Panc1 (cell line): ENCODE measurements at regions of chr5 and their contacts with region 1.

Region 1: GRCh38 chr5:143582869-143583268 is 179.4 kb upstream of the NR3C1 start:
- DNase-seq: no peak
- ATAC-seq: no peak
- H3K4me3 ChIP-seq: no peak overlapping the region
- H3K27ac ChIP-seq: no peak overlapping the region
- H3K4me1 ChIP-seq: no peaks in the 10 kb centered on the region
- H3K27me3 ChIP-seq: no peaks in the 10 kb centered on the region
- CTCF ChIP-seq: no peak

Region 2: DNA sequence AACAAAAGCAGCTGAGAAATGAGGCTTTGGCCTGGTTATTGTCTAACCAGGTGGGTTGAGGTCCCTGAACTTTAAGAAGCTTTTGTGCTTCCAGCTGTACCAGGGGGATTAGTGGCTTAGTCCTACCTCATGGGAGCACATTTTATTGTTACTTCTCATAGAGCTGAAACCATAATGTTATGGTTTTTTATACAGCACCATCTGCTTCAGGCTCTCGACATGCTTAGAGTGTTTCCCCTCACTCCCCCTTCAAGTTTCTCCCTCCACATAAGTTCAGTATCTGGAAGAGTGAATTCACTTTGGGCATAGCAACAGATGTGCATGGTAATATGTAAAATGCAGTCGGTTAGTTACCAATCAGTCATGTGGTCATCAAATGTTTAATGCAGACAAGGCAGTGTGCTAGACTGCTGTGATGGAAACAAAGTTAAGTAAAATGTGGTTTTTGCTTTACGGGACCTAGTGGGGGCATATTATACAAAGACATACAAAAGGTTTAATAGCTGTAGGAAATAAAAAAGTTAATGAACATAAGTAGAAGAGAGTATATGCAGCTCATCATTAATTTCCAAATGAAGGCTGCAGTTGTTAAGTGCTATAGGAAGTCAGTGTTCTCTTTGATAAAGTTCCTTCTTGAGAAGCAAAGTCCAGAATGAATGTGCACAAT is 1162.2 kb before region 1 on chr5:
- CTCF ChIA-PET with region 1: no interaction called
- POLR2A ChIA-PET with region 1: interaction called, 18 read pairs
- in situ Hi-C with region 1: no loop called
- intact Hi-C with region 1: no loop called
- DNase-seq: no peak
- ATAC-seq: no peak
- H3K4me3 ChIP-seq: no peak overlapping the region
- H3K27ac ChIP-seq: no peak overlapping the region
- H3K4me1 ChIP-seq: 0 out of 2 replicates have a peak, but pooled peaks cover 5% of the 10 kb centered on the region
- H3K27me3 ChIP-seq: no peaks in the 10 kb centered on the region
- CTCF ChIP-seq: no peak

Region 3: GRCh38 chr5:142959683-142960657 is 622.9 kb before region 1 on chr5:
- CTCF ChIA-PET with region 1: no interaction called
- POLR2A ChIA-PET with region 1: interaction called, 13 read pairs
- in situ Hi-C with region 1: no loop called
- intact Hi-C with region 1: no loop called
- DNase-seq: peak; percentile 59
- ATAC-seq: peak; percentile 81
- H3K4me3 ChIP-seq: no peak overlapping the region
- H3K27ac ChIP-seq: no peak overlapping the region
- H3K4me1 ChIP-seq: 0 out of 2 replicates have a peak, but pooled peaks cover 3% of the 10 kb centered on the region
- H3K27me3 ChIP-seq: no peaks in the 10 kb centered on the region
- CTCF ChIP-seq: no peak

Region 4: GRCh38 chr5:143968011-143968878 is 385.4 kb after region 1 on chr5:
- CTCF ChIA-PET with region 1: no interaction called
- POLR2A ChIA-PET with region 1: no interaction called
- in situ Hi-C with region 1: no loop called
- intact Hi-C with region 1: no loop called
- DNase-seq: peak; percentile 48
- ATAC-seq: peak; percentile 80; the same call in 1 of the 2 replicates
- H3K4me3 ChIP-seq: no peak overlapping the region
- H3K27ac ChIP-seq: no peak overlapping the region
- H3K4me1 ChIP-seq: no peaks in the 10 kb centered on the region
- H3K27me3 ChIP-seq: peaks cover 5% of the 10 kb centered on the region; the same call in 1 of the 2 replicates
- CTCF ChIP-seq: peak; percentile 43; the same call in 1 of the 2 replicates

Region 5: DNA sequence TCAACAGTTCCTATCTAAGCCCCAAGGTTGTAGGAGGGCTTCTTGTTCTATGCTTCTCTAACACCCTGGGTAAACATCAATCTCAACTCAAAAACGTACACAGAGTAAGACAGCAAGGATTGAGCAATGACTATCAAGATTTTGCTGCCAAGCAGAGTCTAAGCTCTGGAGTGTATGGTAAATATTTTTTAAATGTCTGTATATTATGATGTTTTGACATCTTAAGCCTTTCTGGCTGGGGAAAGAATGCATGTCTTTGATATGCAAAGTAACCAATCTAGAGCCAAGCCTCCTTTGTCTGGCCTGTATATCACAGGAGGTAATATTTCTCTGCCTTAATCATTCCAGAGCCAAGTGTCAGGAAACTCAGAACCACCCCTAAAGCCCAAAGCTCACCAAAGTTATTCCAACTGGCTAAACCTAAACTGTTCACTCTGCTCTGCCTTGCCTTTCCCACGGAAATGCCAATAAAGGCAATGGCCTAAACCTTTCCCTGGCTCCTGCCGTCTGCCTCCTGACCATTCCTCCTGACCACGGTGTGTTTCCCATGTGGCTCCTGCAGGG is 542.4 kb after region 1 on chr5:
- CTCF ChIA-PET with region 1: no interaction called
- POLR2A ChIA-PET with region 1: no interaction called
- in situ Hi-C with region 1: no loop called
- intact Hi-C with region 1: no loop called
- DNase-seq: no peak
- ATAC-seq: no peak
- H3K4me3 ChIP-seq: no peak overlapping the region
- H3K27ac ChIP-seq: no peak overlapping the region
- H3K4me1 ChIP-seq: no peaks in the 10 kb centered on the region
- H3K27me3 ChIP-seq: no peaks in the 10 kb centered on the region
- CTCF ChIP-seq: no peak